PC-3 (cell line): ENCODE measurements at regions of chr13 and their contacts with region 1.

Region 1: GRCh38 chr13:25001476-25002206 is 94.3 kb upstream of the PABPC3 start:
- DNase-seq: peak; percentile 28
- ATAC-seq: no peak
- H3K4me3 ChIP-seq: no peak overlapping the region; the same call in 1 of the 2 replicates
- H3K27ac ChIP-seq: no peak overlapping the region
- H3K4me1 ChIP-seq: peaks cover 11% of the 10 kb centered on the region
- H3K27me3 ChIP-seq: no peaks in the 10 kb centered on the region
- CTCF ChIP-seq: no peak

Region 2: GRCh38 chr13:25018729-25019115 is 17.1 kb after region 1 on chr13:
- CTCF ChIA-PET with region 1: no interaction called
- POLR2A ChIA-PET with region 1: no interaction called
- intact Hi-C with region 1: no loop called
- DNase-seq: no peak
- ATAC-seq: no peak
- H3K4me3 ChIP-seq: peak overlapping the region; percentile 24; the same call in 1 of the 2 replicates
- H3K27ac ChIP-seq: no peak overlapping the region
- H3K4me1 ChIP-seq: no peaks in the 10 kb centered on the region
- H3K27me3 ChIP-seq: peaks cover 24% of the 10 kb centered on the region
- CTCF ChIP-seq: no peak

Region 3: GRCh38 chr13:25037057-25037813 is 35.6 kb after region 1 on chr13:
- CTCF ChIA-PET with region 1: interaction called, 6 read pairs
- POLR2A ChIA-PET with region 1: no interaction called
- intact Hi-C with region 1: loop called (anchors 1 kb)
- DNase-seq: peak; percentile 68
- ATAC-seq: peak; percentile 87
- H3K4me3 ChIP-seq: no peak overlapping the region
- H3K27ac ChIP-seq: no peak overlapping the region
- H3K4me1 ChIP-seq: no peaks in the 10 kb centered on the region
- H3K27me3 ChIP-seq: peaks cover 56% of the 10 kb centered on the region
- CTCF ChIP-seq: peak; percentile 77

Region 4: DNA sequence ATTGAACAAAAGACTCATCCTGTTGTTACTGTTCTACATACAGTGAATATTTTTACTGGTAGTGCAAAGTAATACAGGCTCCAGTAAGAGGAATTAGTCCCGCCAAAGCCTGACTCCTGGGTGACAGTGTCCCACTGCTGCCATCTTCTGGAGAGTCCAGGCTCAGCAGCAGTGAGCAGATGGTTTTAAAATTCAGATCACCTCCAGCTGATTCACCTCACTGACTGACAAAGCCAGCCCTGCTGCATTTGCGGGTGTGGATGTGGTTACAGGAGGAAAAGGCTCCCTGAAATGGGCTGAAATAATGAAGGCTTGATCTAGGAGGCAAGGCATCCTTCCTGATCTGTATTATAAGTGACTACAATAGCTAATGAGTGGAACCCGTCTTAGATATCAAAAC is 112.6 kb after region 1 on chr13:
- CTCF ChIA-PET with region 1: no interaction called
- POLR2A ChIA-PET with region 1: no interaction called
- intact Hi-C with region 1: loop called (anchors 1 kb)
- DNase-seq: peak; percentile 81
- ATAC-seq: peak; percentile 97
- H3K4me3 ChIP-seq: no peak overlapping the region
- H3K27ac ChIP-seq: no peak overlapping the region
- H3K4me1 ChIP-seq: no peaks in the 10 kb centered on the region
- H3K27me3 ChIP-seq: peaks cover 32% of the 10 kb centered on the region
- CTCF ChIP-seq: peak; percentile 84

Region 5: DNA sequence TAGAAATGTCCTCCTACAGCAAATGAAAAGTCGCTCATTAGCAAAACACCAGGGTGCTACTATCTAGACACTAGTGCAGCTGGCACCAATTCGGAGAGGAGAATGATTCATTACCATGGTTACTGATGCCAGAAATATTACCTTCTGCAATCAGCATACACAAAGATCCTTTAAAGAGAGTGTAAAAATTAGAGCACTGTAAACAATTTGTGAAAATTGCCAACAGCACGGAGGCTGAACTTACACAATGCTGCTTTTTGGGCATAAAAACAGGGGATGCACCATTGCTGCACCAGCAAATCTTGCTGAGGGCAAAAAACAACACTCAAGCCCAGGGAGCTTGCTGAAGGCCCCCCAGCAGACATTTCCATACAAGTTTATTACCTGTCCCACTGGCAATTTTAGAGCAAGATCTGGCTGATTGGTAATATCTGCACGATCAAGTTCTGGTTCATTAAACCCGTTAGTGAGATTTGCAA is 136.0 kb after region 1 on chr13:
- CTCF ChIA-PET with region 1: no interaction called
- POLR2A ChIA-PET with region 1: no interaction called
- intact Hi-C with region 1: no loop called
- DNase-seq: no peak
- ATAC-seq: no peak
- H3K4me3 ChIP-seq: no peak overlapping the region
- H3K27ac ChIP-seq: no peak overlapping the region
- H3K4me1 ChIP-seq: no peaks in the 10 kb centered on the region
- H3K27me3 ChIP-seq: peaks cover 63% of the 10 kb centered on the region
- CTCF ChIP-seq: no peak